ENCODE measurements at regions of chr9 and their contacts with region 1.

Region 1: GRCh38 chr9:97468658-97469448 is 32.6 kb upstream of the TMOD1 start:
- DNase-seq: peak; percentile 67
- ATAC-seq: peak; percentile 98

Region 2: GRCh38 chr9:97602430-97602829 is 133.6 kb after region 1 on chr9:
- intact Hi-C with region 1: loop called (anchors 5 kb)
- DNase-seq: peak; percentile 49
- ATAC-seq: peak; percentile 55

Region 3: GRCh38 chr9:97615439-97616072 is 146.7 kb after region 1 on chr9:
- intact Hi-C with region 1: loop called (anchors 5 kb)
- DNase-seq: no peak
- ATAC-seq: peak; percentile 75

Measured in left ventricle myocardium superior (tissue), 1 donor.